Prostate gland (tissue), 2 donors: ENCODE measurements at regions of chr22 and their contacts with region 1.

Region 1: GRCh38 chr22:45082795-45083194 is 73.0 kb upstream of the PHF21B start:
- DNase-seq: no peak
- H3K4me3 ChIP-seq: no peak overlapping the region
- H3K27ac ChIP-seq: no peak overlapping the region
- H3K4me1 ChIP-seq: no peaks in the 10 kb centered on the region
- H3K27me3 ChIP-seq: peaks cover 9% of the 10 kb centered on the region
- CTCF ChIP-seq: no peak
- POLR2A ChIP-seq: no peak

Region 2: DNA sequence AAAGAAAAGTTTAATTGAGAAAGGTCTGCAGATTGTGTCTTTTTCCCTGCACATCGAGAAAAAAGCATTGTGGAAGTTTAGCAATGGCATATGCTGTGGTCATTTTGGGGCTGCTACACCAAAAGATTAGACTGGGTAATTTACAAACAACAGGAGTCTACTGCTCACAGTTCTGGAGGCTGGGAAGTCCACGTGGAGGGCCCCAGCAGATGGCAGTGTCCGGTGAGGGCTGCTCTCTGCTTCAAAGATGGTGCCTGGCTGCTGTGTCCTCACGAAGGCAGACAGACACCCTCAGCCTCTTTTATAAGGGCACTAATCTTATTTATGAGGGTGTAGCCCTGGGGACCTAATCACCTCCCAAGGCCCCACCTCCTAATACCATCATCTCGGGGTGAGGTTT is 94.1 kb before region 1 on chr22:
- intact Hi-C with region 1: loop called (anchors 10 kb)
- DNase-seq: no peak
- H3K4me3 ChIP-seq: no peak overlapping the region
- H3K27ac ChIP-seq: no peak overlapping the region
- H3K4me1 ChIP-seq: no peaks in the 10 kb centered on the region
- H3K27me3 ChIP-seq: no peaks in the 10 kb centered on the region
- CTCF ChIP-seq: peak in 1 of 4 experiments; percentile 11
- POLR2A ChIP-seq: no peak